Aorta (tissue), 5 donors: ENCODE measurements at regions of chr1 and their contacts with region 1.

Region 1: GRCh38 chr1:235093696-235094592 is 34.7 kb downstream of the TOMM20 start:
- DNase-seq: peak; percentile 79 to 93
- ATAC-seq: peak; percentile 88
- H3K4me3 ChIP-seq: no peak overlapping the region
- H3K27ac ChIP-seq: no peak overlapping the region
- H3K4me1 ChIP-seq: no peaks in the 10 kb centered on the region
- H3K27me3 ChIP-seq: no peaks in the 10 kb centered on the region

Region 2: GRCh38 chr1:234488054-234489006 is 605.6 kb before region 1 on chr1:
- intact Hi-C with region 1: loop called in 1 of 2 experiments (anchors 2 kb)
- DNase-seq: no peak
- ATAC-seq: no peak
- H3K4me3 ChIP-seq: no peak overlapping the region
- H3K27ac ChIP-seq: no peak overlapping the region
- H3K4me1 ChIP-seq: peaks cover 0 to 5% of the 10 kb centered on the region in 2 donors
- H3K27me3 ChIP-seq: no peaks in the 10 kb centered on the region

Region 3: GRCh38 chr1:235060607-235061470 is 33.1 kb before region 1 on chr1:
- intact Hi-C with region 1: no loop called
- DNase-seq: no peak
- ATAC-seq: peak; percentile 30
- H3K4me3 ChIP-seq: no peak overlapping the region
- H3K27ac ChIP-seq: no peak overlapping the region
- H3K4me1 ChIP-seq: no peaks in the 10 kb centered on the region
- H3K27me3 ChIP-seq: no peaks in the 10 kb centered on the region